ENCODE measurements at regions of chr9 and their contacts with region 1.

Region 1: GRCh38 chr9:86754581-86755560 is 192.4 kb downstream of the GAS1 start:
- DNase-seq: no peak
- ATAC-seq: no peak
- H3K4me3 ChIP-seq: no peak overlapping the region
- H3K4me3 Mint-ChIP-seq: no peak overlapping the region
- H3K27ac ChIP-seq: no peak overlapping the region
- H3K27ac Mint-ChIP-seq: no peak overlapping the region
- H3K4me1 ChIP-seq: no peaks in the 10 kb centered on the region
- H3K4me1 Mint-ChIP-seq: no peaks in the 10 kb centered on the region
- H3K27me3 ChIP-seq: peaks cover 0 to 8% of the 10 kb centered on the region in 2 experiments
- H3K27me3 Mint-ChIP-seq: peaks cover 11 to 15% of the 10 kb centered on the region in 2 donors

Region 2: GRCh38 chr9:86624630-86625029 is 130.2 kb before region 1 on chr9:
- CTCF ChIA-PET with region 1: no interaction called
- POLR2A ChIA-PET with region 1: no interaction called
- DNase-seq: no peak
- ATAC-seq: no peak
- H3K4me3 ChIP-seq: no peak overlapping the region
- H3K4me3 Mint-ChIP-seq: no peak overlapping the region
- H3K27ac ChIP-seq: no peak overlapping the region
- H3K27ac Mint-ChIP-seq: no peak overlapping the region
- H3K4me1 ChIP-seq: no peaks in the 10 kb centered on the region
- H3K4me1 Mint-ChIP-seq: no peaks in the 10 kb centered on the region
- H3K27me3 ChIP-seq: peaks cover 0 to 3% of the 10 kb centered on the region in 2 experiments
- H3K27me3 Mint-ChIP-seq: no peaks in the 10 kb centered on the region

Region 3: GRCh38 chr9:86721226-86721781 is 33.6 kb before region 1 on chr9:
- CTCF ChIA-PET with region 1: interaction called in 1 of 2 experiments, 10 read pairs
- POLR2A ChIA-PET with region 1: no interaction called
- DNase-seq: no peak
- ATAC-seq: no peak
- H3K4me3 ChIP-seq: no peak overlapping the region
- H3K4me3 Mint-ChIP-seq: no peak overlapping the region
- H3K27ac ChIP-seq: no peak overlapping the region
- H3K27ac Mint-ChIP-seq: no peak overlapping the region
- H3K4me1 ChIP-seq: peaks cover 6 to 10% of the 10 kb centered on the region in 2 experiments
- H3K4me1 Mint-ChIP-seq: peaks cover 2 to 6% (median 3%) of the 10 kb centered on the region in 3 donors
- H3K27me3 ChIP-seq: no peaks in the 10 kb centered on the region
- H3K27me3 Mint-ChIP-seq: peaks cover 2 to 24% of the 10 kb centered on the region in 2 donors

Region 4: DNA sequence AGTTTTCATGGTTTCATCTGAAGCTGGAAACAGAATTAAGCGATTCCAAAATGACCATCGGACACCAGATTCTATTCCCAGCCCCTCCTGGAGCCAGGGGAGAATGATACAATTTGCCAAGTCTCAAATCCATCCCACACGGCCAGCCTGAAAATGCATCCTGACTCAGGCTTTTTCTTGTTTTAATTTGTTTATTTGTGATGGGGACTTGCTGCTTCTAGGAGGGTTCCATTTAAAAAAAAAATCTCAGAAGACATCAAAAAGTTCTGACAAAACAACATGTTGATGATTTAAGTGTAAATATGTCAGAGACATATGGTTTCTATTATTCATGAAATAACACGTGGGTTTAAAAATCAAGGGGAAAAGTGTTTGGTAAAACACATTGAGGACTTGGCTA is 19.2 kb after region 1 on chr9:
- CTCF ChIA-PET with region 1: no interaction called
- POLR2A ChIA-PET with region 1: no interaction called
- DNase-seq: no peak
- ATAC-seq: no peak
- H3K4me3 ChIP-seq: no peak overlapping the region
- H3K4me3 Mint-ChIP-seq: no peak overlapping the region
- H3K27ac ChIP-seq: no peak overlapping the region
- H3K27ac Mint-ChIP-seq: no peak overlapping the region
- H3K4me1 ChIP-seq: no peaks in the 10 kb centered on the region
- H3K4me1 Mint-ChIP-seq: no peaks in the 10 kb centered on the region
- H3K27me3 ChIP-seq: no peaks in the 10 kb centered on the region
- H3K27me3 Mint-ChIP-seq: peaks cover 4 to 7% of the 10 kb centered on the region in 2 donors

Measured in T-cell (primary cell).